ENCODE measurements at regions of chr10 and their contacts with region 1.

Region 1: DNA sequence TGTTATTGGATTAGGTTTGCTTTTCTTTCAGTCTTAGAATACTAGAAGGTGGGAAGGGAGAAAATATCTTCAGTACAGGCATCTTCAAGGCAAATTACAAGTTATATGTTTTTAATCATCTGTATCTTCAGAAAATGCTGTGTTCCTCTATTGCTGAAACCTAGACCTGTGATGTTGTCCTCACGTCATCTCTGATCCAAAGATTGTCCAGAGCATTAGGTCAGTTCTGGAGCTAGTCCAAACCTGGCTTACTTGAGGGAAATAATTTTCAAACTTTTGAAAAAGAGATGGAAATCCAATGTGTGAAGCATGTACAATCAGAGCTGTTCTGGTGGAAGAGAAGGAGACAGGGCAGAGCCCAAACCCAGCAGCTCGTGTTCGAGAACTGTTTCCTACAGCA is 217.3 kb downstream of the ZEB1 start:
- DNase-seq: no peak
- ATAC-seq: no peak
- H3K4me3 ChIP-seq: no peak overlapping the region
- H3K27ac ChIP-seq: no peak overlapping the region
- H3K4me1 ChIP-seq: no peaks in the 10 kb centered on the region
- H3K27me3 ChIP-seq: no peaks in the 10 kb centered on the region
- CTCF ChIP-seq: no peak

Region 2: GRCh38 chr10:31451766-31452165 is 84.5 kb before region 1 on chr10:
- intact Hi-C with region 1: no loop called
- DNase-seq: no peak
- ATAC-seq: peak in 1 of 4 donors; percentile 66
- H3K4me3 ChIP-seq: peak overlapping the region; percentile 15
- H3K27ac ChIP-seq: peak overlapping the region; percentile 2
- H3K4me1 ChIP-seq: peaks cover 29% of the 10 kb centered on the region
- H3K27me3 ChIP-seq: no peaks in the 10 kb centered on the region
- CTCF ChIP-seq: no peak

Region 3: DNA sequence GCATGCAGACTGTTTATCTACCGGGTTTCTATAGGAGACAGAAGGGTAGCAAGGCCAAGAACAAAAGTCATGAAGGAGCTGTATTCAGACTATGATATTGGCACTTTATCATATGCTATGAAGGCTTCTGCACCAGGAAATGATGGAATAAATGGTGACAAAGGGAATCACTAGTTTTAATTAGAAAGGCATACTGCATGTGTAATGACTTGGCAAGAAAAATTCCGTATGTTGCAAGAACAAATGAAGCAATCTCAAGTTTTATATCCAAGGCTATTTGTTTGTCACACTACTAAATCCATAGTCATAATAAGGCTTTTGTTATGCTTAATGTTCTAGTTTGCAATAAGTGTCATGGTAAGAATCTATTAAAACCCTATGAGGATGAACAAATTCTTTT is 13.6 kb after region 1 on chr10:
- intact Hi-C with region 1: no loop called
- DNase-seq: no peak
- ATAC-seq: peak in 1 of 4 donors; percentile 34
- H3K4me3 ChIP-seq: no peak overlapping the region
- H3K27ac ChIP-seq: no peak overlapping the region
- H3K4me1 ChIP-seq: no peaks in the 10 kb centered on the region
- H3K27me3 ChIP-seq: no peaks in the 10 kb centered on the region
- CTCF ChIP-seq: no peak

Region 4: GRCh38 chr10:31581741-31582313 is 45.5 kb after region 1 on chr10:
- intact Hi-C with region 1: loop called in 1 of 2 experiments (anchors 10 kb)
- DNase-seq: no peak
- ATAC-seq: peak in 1 of 4 donors; percentile 36
- H3K4me3 ChIP-seq: no peak overlapping the region
- H3K27ac ChIP-seq: no peak overlapping the region
- H3K4me1 ChIP-seq: peaks cover 10% of the 10 kb centered on the region
- H3K27me3 ChIP-seq: no peaks in the 10 kb centered on the region
- CTCF ChIP-seq: no peak